ENCODE measurements at regions of chr1 and their contacts with region 1.

Region 1: GRCh38 chr1:68470388-68470970 is 20.7 kb upstream of the RPE65 start:
- DNase-seq: peak; percentile 22
- ATAC-seq: peak; percentile 45; the same call in 1 of the 2 replicates
- H3K4me3 ChIP-seq: no peak overlapping the region
- H3K27ac ChIP-seq: no peak overlapping the region
- H3K4me1 ChIP-seq: no peaks in the 10 kb centered on the region
- H3K27me3 ChIP-seq: no peaks in the 10 kb centered on the region
- CTCF ChIP-seq: peak; percentile 81

Region 2: GRCh38 chr1:68590473-68590872 is 120.0 kb after region 1 on chr1:
- CTCF ChIA-PET with region 1: no interaction called
- POLR2A ChIA-PET with region 1: no interaction called
- intact Hi-C with region 1: loop called (anchors 1 kb)
- DNase-seq: peak; percentile 7
- ATAC-seq: peak; percentile 48; the same call in 1 of the 2 replicates
- H3K4me3 ChIP-seq: no peak overlapping the region
- H3K27ac ChIP-seq: no peak overlapping the region
- H3K4me1 ChIP-seq: no peaks in the 10 kb centered on the region
- H3K27me3 ChIP-seq: peaks cover 36% of the 10 kb centered on the region
- CTCF ChIP-seq: peak; percentile 53; the same call in 1 of the 2 replicates

Region 3: GRCh38 chr1:69737527-69738185 is 1267.2 kb after region 1 on chr1:
- CTCF ChIA-PET with region 1: no interaction called
- POLR2A ChIA-PET with region 1: no interaction called
- intact Hi-C with region 1: loop called (anchors 5 kb)
- DNase-seq: peak; percentile 79
- ATAC-seq: peak; percentile 77
- H3K4me3 ChIP-seq: no peak overlapping the region
- H3K27ac ChIP-seq: no peak overlapping the region
- H3K4me1 ChIP-seq: no peaks in the 10 kb centered on the region
- H3K27me3 ChIP-seq: peaks cover 33% of the 10 kb centered on the region
- CTCF ChIP-seq: peak; percentile 87